Activated CD4-positive, alpha-beta T cell treated with anti-CD3 and anti-CD28 coated beads, Interleukin-2, amount 10 ng/mL, durations not matched to agents 24 days and 14 days (primary cell): ENCODE measurements at regions of chr2 and their contacts with region 1.

Region 1: GRCh38 chr2:227125506-227125905 is 38.5 kb downstream of the COL4A4 start:
- DNase-seq: no peak
- H3K4me3 Mint-ChIP-seq: no peak overlapping the region
- H3K27ac Mint-ChIP-seq: no peak overlapping the region
- H3K4me1 Mint-ChIP-seq: no peaks in the 10 kb centered on the region
- H3K27me3 Mint-ChIP-seq: peaks cover 15% of the 10 kb centered on the region

Region 2: GRCh38 chr2:227884511-227884947 is 759.0 kb after region 1 on chr2:
- intact Hi-C with region 1: loop called (anchors 5 kb)
- DNase-seq: peak; percentile 85
- H3K4me3 Mint-ChIP-seq: no peak overlapping the region
- H3K27ac Mint-ChIP-seq: no peak overlapping the region
- H3K4me1 Mint-ChIP-seq: peaks cover 1% of the 10 kb centered on the region
- H3K27me3 Mint-ChIP-seq: peaks cover 7% of the 10 kb centered on the region